Mammary epithelial cell (primary cell): ENCODE measurements at regions of chr20 and their contacts with region 1.

Region 1: GRCh38 chr20:50165684-50166554 is 12.4 kb upstream of the PEDS1 start:
- DNase-seq: peak; percentile 100
- H3K4me3 ChIP-seq: peak overlapping the region; percentile 20 to 48 (median 21)
- H3K27ac ChIP-seq: peak overlapping the region; percentile 97
- H3K4me1 ChIP-seq: peaks cover 32% of the 10 kb centered on the region
- H3K27me3 ChIP-seq: no peaks in the 10 kb centered on the region
- CTCF ChIP-seq: peak in 1 of 2 donors; percentile 14

Region 2: GRCh38 chr20:49982346-49983122 is 183.4 kb before region 1 on chr20 and contains the start of gene SNAI1:
- CTCF ChIA-PET with region 1: interaction called, 4 read pairs
- dilution Hi-C with region 1: no loop called
- in situ Hi-C with region 1: no loop called
- intact Hi-C with region 1: loop called (anchors 1 kb)
- DNase-seq: peak; percentile 68
- H3K4me3 ChIP-seq: peak within 1 kb of the TSS in 1 of 3 experiments; percentile 32
- H3K27ac ChIP-seq: no peak within 1 kb of the TSS
- H3K4me1 ChIP-seq: peaks cover 15% of the 10 kb centered on the region
- H3K27me3 ChIP-seq: peaks cover 2% of the 10 kb centered on the region
- CTCF ChIP-seq: peak in 1 of 2 donors; percentile 26
- total RNA-seq, gene SNAI1: not detected

Region 3: DNA sequence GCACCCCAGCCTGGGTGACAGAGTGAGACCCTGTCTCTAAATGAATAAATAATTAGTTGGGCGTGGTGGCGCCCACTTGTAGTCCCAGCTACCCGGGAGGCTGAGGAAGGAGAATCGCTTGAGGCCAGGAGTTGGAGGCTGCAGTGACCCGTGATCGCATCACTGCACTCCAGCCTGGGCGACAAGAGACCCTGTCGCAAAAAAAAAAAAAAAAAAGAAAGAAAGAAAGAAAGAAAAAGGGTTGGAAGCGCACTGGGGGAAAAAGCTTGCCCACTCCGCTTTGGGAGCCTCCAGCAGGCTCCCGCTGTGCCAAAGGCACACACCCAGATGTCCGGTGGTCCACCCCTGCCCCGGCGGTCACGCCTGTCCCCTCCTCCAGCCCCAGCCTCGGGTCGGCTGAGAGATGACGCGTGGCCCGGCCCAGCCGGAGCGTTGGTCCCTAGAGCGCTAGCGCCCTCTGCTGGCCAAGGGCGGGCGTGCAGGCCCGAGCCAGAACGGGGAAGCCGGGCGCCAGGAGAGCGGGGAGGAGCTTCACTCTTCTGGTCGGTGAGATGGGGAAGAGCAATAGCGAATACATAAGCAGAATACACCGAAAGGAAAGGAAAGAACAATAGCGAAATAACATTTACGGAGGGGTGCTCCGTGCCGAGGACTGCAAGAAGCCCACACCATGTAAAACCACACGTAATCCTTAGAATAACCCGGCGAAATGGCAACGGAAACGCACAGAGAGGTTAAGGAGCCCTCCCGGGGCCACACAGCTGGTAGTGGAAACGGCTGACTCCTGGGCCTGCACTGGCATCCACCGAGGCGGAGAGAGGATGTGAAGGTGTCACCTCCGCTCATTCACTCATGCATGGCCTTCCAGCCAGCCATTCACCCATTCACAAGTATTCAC is 94.7 kb before region 1 on chr20:
- CTCF ChIA-PET with region 1: no interaction called
- dilution Hi-C with region 1: no loop called
- in situ Hi-C with region 1: no loop called
- intact Hi-C with region 1: loop called (anchors 1 kb)
- DNase-seq: peak; percentile 68
- H3K4me3 ChIP-seq: peak overlapping the region; percentile 23 to 46 (median 42)
- H3K27ac ChIP-seq: no peak overlapping the region
- H3K4me1 ChIP-seq: no peaks in the 10 kb centered on the region
- H3K27me3 ChIP-seq: no peaks in the 10 kb centered on the region
- CTCF ChIP-seq: peak; percentile 95 to 98

Region 4: DNA sequence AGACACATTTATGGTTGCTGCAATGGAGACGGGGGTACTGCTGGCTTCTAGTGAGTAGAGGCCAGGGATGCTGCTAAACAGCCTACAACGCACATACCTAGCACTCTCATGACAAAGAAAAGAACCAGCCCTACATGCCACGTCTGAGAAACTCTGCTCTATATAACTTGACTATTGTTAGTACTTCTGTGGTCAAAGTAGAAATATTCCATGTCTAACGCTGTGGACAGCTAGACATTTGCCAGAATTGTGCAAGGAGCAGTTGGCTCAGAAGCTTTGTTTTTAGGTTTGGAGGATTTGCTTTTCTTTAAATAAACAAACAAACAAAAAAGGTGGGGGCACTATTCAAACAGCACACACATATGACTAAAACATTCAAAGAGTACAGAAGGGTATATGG is 73.5 kb before region 1 on chr20:
- CTCF ChIA-PET with region 1: interaction called, 4 read pairs
- dilution Hi-C with region 1: loop called (anchors 5 kb)
- in situ Hi-C with region 1: no loop called
- intact Hi-C with region 1: no loop called
- DNase-seq: no peak
- H3K4me3 ChIP-seq: no peak overlapping the region
- H3K27ac ChIP-seq: no peak overlapping the region
- H3K4me1 ChIP-seq: peaks cover 7% of the 10 kb centered on the region
- H3K27me3 ChIP-seq: no peaks in the 10 kb centered on the region
- CTCF ChIP-seq: no peak

Region 5: DNA sequence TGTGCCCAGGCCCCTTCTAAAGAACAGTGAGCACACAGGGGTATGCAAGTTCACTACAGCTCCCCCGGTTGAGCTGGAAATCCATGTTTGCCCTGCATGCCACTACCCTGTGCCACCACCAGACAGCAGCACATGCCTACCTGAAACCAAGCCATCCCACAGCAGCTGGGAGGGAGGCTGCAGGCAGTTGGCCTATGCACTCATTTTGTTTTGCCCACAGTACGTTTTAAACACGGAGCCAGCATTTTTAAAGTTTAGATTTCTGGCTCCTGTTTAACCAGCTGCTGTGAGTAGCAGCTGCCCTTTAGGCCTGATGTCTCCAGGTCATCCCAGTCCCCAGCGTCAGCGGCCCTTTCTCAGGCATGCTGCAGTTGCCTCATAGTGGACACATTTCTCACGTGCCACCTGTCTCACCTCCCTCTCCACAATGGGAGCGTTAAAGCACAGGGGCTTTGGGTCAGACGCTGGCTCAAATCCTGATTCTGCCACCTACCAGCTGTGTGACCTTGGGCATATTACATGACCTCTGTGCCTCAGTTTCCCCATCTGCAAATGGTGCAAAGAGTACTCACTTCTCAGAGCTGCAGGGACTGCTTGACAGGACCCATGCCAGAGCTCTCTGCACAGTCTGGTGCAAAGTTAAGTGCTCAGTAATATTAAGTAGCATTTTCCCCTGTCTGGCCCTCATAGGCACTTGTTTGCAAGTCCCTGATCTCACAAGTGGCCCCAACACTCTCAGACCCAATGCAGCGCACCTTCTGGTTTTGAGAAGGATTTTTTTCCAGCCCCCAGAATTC is 44.8 kb before region 1 on chr20:
- CTCF ChIA-PET with region 1: interaction called, 11 read pairs
- dilution Hi-C with region 1: loop called (anchors 5 kb)
- in situ Hi-C with region 1: loop called (anchors 5 to 10 kb)
- intact Hi-C with region 1: loop called (anchors 1 kb)
- DNase-seq: no peak
- H3K4me3 ChIP-seq: no peak overlapping the region
- H3K27ac ChIP-seq: no peak overlapping the region
- H3K4me1 ChIP-seq: peaks cover 4% of the 10 kb centered on the region
- H3K27me3 ChIP-seq: no peaks in the 10 kb centered on the region
- CTCF ChIP-seq: peak; percentile 96 to 99

Region 6: GRCh38 chr20:50144362-50144761 is 21.6 kb before region 1 on chr20:
- CTCF ChIA-PET with region 1: interaction called, 11 read pairs
- dilution Hi-C with region 1: no loop called
- in situ Hi-C with region 1: no loop called
- intact Hi-C with region 1: loop called (anchors 1 kb)
- DNase-seq: peak; percentile 100
- H3K4me3 ChIP-seq: no peak overlapping the region
- H3K27ac ChIP-seq: peak overlapping the region; percentile 91
- H3K4me1 ChIP-seq: peaks cover 82% of the 10 kb centered on the region
- H3K27me3 ChIP-seq: no peaks in the 10 kb centered on the region
- CTCF ChIP-seq: no peak

Region 7: DNA sequence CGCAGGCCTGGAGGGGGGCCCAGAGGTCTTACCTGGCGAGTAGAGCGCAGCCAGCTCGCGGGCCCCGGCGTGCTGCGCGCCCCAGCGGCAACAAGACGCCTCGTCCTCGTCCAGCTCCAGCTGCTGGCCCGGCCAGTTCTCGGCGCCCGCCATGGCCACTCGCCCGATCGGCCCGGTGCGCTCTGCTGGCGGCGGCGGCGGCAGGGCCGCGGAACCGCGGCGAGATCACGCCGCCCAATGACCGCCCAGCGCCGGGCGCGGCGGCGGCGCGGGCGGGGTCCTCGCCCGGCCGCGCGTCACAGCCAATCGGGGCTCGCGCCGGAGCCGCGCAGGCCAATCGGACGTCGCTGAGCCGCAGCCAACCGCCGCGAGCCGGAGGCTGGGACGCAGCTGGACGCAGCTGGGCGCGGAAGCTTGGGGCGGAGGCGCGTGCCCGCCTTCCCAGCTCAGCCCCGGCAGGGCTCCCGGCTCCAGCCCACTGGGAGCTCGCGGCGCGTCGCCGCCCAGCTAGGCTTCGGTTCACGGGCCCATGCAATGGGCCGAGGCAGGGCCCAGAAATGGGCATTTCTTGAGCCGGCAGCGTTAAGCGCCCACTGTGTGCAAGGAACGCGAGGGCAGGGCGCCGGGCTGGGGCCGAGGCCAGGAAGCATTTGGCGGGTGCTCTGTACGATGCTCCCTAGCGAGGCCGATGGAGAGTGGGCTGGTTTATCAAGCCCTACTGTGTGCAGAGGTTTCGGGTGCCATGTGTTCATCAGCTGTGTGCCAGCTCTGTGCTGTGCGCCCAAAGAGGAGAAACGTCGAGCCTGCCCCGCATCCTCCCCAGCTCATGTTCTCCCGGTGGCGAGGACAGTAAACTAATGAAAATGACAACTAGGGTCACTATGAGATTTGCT is 12.2 kb before region 1 on chr20 and contains the start of gene PEDS1:
- CTCF ChIA-PET with region 1: interaction called, 3 read pairs
- dilution Hi-C with region 1: no loop called
- in situ Hi-C with region 1: no loop called
- intact Hi-C with region 1: loop called (anchors 1 kb)
- DNase-seq: peak; percentile 91
- H3K4me3 ChIP-seq: peak within 1 kb of the TSS; percentile 80 to 94 (median 90)
- H3K27ac ChIP-seq: peak within 1 kb of the TSS; percentile 89
- H3K4me1 ChIP-seq: peaks cover 39% of the 10 kb centered on the region
- H3K27me3 ChIP-seq: no peaks in the 10 kb centered on the region
- CTCF ChIP-seq: no peak
- total RNA-seq, gene PEDS1: 28.8 to 29.5 TPM

Region 8: DNA sequence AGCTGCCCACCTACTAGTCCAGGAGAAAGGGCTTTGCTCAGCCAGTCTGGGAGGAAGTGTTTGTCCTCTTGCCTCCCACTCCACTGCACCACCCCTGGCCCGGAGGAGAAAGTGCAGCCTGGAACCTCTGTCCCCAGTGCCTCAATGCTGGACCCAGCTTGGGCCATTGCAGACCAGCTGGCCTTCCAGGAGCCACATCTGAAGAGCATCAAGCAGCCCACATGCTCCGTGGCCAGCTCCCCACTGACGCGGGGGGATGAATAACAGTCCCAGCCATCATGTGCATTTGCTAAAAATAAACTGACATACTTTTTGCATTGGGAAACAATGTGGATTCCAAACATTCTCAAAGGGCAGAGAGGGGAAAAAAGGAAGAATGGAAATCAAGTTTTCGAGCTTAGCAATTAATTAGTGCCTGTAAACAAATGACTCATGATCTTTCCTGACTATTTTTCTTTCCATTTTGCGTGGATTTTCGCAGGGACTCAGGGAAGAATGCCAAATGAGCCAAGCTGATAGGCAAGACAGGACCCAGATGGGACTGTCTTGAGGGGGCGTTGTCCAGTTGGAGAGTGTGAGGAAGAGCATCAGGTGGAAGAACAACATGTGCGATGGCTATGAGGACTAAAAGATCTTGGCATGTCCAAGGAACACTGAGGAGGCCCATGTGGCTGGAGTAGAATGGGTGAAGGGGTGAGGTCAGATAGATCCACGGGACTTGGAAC is 58.8 kb after region 1 on chr20:
- CTCF ChIA-PET with region 1: no interaction called
- dilution Hi-C with region 1: no loop called
- in situ Hi-C with region 1: no loop called
- intact Hi-C with region 1: no loop called
- DNase-seq: peak; percentile 36
- H3K4me3 ChIP-seq: no peak overlapping the region
- H3K27ac ChIP-seq: no peak overlapping the region
- H3K4me1 ChIP-seq: peaks cover 24% of the 10 kb centered on the region
- H3K27me3 ChIP-seq: no peaks in the 10 kb centered on the region
- CTCF ChIP-seq: peak; percentile 3 to 8